GM12878 (cell line): ENCODE measurements at regions of chr19 and their contacts with region 1.

Region 1: GRCh38 chr19:18521885-18522624 is at the start of gene ELL:
- DNase-seq: peak; percentile 99
- ATAC-seq: peak; percentile 94
- H3K4me3 ChIP-seq: peak within 1 kb of the TSS; percentile 98
- H3K27ac ChIP-seq: peak within 1 kb of the TSS; percentile 89
- H3K4me1 ChIP-seq: peaks cover 8% of the 10 kb centered on the region
- H3K27me3 ChIP-seq: no peaks in the 10 kb centered on the region
- CTCF ChIP-seq: 0 out of 6 replicates have a peak, but pooled peaks of 1 of the 3 experiments have one; percentile 2
- EP300 ChIP-seq: no peak; a peak in 1 of 4 replicates
- POLR2A ChIP-seq: peak; percentile 98
- RAD21 ChIP-seq: no peak
- polyA plus RNA-seq, gene ELL: 0.91 to 0.98 TPM

Region 2: GRCh38 chr19:18507021-18507726 is 14.9 kb before region 1 on chr19:
- CTCF ChIA-PET with region 1: interaction called, 11 read pairs
- POLR2A ChIA-PET with region 1: no interaction called
- RAD21 ChIA-PET with region 1: interaction called, 4 read pairs
- SMC1A ChIA-PET with region 1: interaction called, 4 read pairs
- in situ Hi-C with region 1: no loop called
- intact Hi-C with region 1: no loop called
- DNase-seq: no peak
- ATAC-seq: no peak
- H3K4me3 ChIP-seq: no peak overlapping the region
- H3K27ac ChIP-seq: no peak overlapping the region
- H3K4me1 ChIP-seq: peaks cover 31% of the 10 kb centered on the region
- H3K27me3 ChIP-seq: no peaks in the 10 kb centered on the region
- CTCF ChIP-seq: no peak
- EP300 ChIP-seq: no peak
- POLR2A ChIP-seq: no peak
- RAD21 ChIP-seq: no peak

Region 3: DNA sequence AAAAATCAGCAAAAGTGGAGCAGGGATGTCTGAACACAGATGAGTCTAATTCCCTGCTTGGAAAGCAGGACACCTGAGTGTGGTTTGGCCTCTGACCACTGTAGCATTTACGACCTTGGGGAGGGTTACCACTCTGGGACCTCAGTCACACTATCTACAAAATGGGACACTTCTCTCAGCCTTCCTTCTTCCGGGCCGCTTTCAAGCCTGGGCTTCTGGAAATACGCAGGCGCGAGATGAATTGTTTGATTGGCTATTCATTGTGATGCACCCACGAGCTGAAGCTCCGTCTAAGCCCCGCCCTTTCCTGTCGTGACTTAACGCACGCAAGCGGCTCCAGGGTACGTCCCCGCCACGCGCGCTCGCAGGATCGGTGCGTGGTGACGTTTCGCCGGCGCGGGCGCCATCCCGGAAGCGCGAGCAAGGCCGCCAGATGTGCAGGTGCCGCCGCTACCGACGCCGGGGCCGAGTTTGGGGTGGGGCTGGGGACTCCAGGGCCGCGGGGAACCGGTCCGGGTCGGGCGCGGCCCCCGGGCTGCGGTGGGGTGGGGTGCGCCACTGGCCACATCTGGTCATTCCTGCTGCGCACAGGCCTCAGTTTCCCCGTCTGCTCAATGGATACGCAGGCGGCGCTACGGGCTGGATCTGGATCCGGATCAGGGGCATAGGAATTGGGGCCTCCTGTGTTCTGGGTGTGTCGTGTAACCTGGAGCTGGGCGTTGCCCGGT is 35.6 kb after region 1 on chr19 and contains the start of gene KXD1:
- CTCF ChIA-PET with region 1: interaction called, 26 read pairs
- POLR2A ChIA-PET with region 1: interaction called, 48 read pairs
- RAD21 ChIA-PET with region 1: interaction called, 9 read pairs
- SMC1A ChIA-PET with region 1: interaction called, 24 read pairs
- in situ Hi-C with region 1: no loop called
- intact Hi-C with region 1: loop called (anchors 1 kb)
- DNase-seq: peak; percentile 98
- ATAC-seq: peak; percentile 97
- H3K4me3 ChIP-seq: peak within 1 kb of the TSS; percentile 95
- H3K27ac ChIP-seq: peak within 1 kb of the TSS; percentile 85
- H3K4me1 ChIP-seq: no peaks in the 10 kb centered on the region
- H3K27me3 ChIP-seq: no peaks in the 10 kb centered on the region
- CTCF ChIP-seq: no peak
- EP300 ChIP-seq: no peak
- POLR2A ChIP-seq: peak; percentile 92
- RAD21 ChIP-seq: no peak
- polyA plus RNA-seq, gene KXD1: 27.5 to 44.9 TPM

Region 4: DNA sequence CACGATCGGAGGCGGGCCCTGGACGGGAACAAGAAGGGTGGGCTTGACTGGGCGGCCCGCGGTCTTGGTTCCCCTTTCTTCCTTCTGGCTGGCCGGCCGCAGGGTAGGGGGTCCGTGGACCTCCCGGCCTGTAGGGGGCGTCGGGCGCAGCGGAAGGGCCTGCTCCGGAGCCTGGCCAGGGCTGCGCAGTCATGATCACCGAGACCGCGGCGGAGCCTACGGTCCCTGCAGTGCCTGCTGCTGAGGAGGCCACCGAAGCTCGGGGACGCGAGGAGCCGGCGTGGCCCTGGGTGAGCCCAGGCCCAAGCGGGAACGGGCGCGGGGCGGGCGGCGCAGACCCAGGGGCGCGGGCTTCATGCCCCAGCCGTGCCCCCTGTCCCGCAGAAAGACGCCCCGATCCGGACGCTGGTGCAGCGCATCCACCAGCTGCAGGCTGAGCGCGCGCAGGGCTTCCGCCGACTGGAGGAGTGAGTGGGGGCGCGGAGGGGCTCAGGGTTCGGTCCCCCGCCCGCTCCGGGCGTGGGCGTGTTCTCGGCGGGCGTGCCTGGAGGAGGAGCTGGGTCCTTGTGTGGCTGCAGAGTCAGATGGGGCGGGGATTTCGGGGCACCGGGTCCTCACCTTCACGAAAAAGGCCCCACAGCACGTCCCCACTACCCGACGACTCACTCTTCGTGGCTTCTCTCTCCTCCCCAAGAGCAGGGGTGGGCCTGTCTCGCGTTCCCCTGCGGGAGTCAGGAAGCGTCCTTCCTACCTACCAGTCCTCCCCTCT is 66.7 kb after region 1 on chr19 and contains the start of gene REX1BD:
- CTCF ChIA-PET with region 1: interaction called, 64 read pairs
- POLR2A ChIA-PET with region 1: interaction called, 21 read pairs
- RAD21 ChIA-PET with region 1: interaction called, 35 read pairs
- SMC1A ChIA-PET with region 1: interaction called, 18 read pairs
- in situ Hi-C with region 1: no loop called
- intact Hi-C with region 1: loop called (anchors 2 kb)
- DNase-seq: peak; percentile 54
- ATAC-seq: peak; percentile 92
- H3K4me3 ChIP-seq: peak within 1 kb of the TSS; percentile 70
- H3K27ac ChIP-seq: peak within 1 kb of the TSS; percentile 72
- H3K4me1 ChIP-seq: peaks cover 32% of the 10 kb centered on the region
- H3K27me3 ChIP-seq: peaks cover 0 to 2% of the 10 kb centered on the region in 2 experiments; a peak in 1 of 4 replicates
- CTCF ChIP-seq: peak; percentile 89 to 92 (median 91)
- EP300 ChIP-seq: 0 out of 4 replicates have a peak, but pooled peaks of 1 of the 2 experiments have one; percentile 3
- POLR2A ChIP-seq: peak; percentile 91
- RAD21 ChIP-seq: no peak
- polyA plus RNA-seq, gene REX1BD: 1.1 to 3.3 TPM

Region 5: DNA sequence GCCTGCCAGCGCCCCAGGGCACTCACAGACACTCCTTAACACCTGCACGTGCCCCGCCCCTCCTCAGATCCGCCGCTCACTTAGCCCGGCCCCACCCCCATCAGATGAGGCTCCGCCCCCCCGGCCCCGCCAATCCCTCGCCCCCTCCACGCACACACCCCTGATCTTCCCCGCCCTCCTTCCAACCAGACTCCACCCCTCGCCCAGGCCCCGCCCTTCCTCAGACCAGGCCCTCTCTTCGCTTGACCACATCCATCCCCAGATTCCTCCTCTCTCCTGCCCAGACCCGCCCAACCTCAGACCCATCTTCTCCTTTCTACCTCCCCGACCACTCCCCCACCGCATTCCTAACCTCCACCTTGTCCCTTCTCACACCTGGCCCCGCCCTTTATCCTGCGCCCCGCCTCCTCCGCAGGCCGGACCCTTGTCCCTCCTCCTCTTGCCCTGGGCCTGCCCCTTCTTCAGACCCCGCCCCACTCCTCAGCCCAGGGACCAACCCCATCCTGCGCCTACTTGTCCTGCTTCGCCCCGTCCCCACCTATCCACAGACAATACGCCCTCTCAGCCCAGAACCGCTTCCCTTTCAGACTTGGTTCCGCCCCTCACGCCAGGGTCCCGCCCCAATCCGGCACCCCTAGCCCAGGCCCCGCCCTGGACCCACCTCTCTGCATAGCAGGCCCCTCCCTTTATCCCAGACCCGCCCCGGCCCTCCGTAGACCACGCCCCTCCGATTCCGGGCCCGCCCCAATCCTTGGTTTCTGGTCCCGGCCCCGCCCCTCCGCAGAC is 114.3 kb after region 1 on chr19:
- CTCF ChIA-PET with region 1: no interaction called
- POLR2A ChIA-PET with region 1: no interaction called
- RAD21 ChIA-PET with region 1: interaction called, 4 read pairs
- SMC1A ChIA-PET with region 1: no interaction called
- in situ Hi-C with region 1: no loop called
- intact Hi-C with region 1: loop called (anchors 1 kb)
- DNase-seq: peak; percentile 83
- ATAC-seq: peak; percentile 96
- H3K4me3 ChIP-seq: peak overlapping the region; percentile 72
- H3K27ac ChIP-seq: peak overlapping the region; percentile 31; the same call in 1 of the 2 replicates
- H3K4me1 ChIP-seq: peaks cover 9% of the 10 kb centered on the region
- H3K27me3 ChIP-seq: no peaks in the 10 kb centered on the region
- CTCF ChIP-seq: no peak
- EP300 ChIP-seq: no peak
- POLR2A ChIP-seq: no peak
- RAD21 ChIP-seq: no peak

Region 6: DNA sequence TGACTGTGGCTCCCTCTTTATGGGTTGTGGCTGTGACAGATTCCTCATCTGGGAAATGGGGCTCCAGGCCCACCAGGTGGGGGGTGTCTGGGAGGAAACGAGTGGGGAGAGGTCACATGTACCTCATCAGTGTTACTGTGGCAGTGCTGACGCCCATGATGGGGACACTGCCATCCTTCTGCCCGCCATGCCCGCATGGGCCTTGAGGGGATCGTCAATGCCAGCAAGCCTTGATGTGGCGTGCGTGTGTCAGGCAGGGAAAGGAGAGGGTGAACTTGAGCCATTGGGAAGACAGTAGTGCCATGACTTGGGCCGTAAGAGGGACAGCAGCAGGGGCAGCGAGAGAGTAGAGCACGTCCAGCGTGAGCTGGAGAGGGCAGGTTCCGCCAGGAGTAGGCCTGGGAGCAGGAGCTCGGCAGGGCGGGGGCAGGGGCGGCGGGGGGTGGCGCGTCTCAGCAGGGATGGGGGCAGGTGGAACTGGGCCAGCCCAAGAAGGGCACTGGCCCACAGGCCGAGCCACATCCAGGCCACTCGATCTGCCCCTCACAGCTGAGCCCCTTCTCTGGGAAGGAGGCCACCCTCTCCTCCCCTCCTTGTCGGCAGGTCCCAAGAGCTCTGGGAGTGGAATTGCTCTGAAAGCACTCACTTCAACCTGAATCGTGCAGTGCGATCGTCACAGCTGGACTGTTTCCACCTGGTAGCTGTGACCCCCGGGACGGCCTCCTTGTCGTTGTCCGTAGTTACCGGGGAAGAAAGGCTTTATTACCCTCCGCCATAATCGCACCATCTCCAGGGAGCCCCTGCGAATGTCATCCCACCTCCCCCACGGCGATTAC is 124.7 kb after region 1 on chr19:
- CTCF ChIA-PET with region 1: no interaction called
- POLR2A ChIA-PET with region 1: no interaction called
- RAD21 ChIA-PET with region 1: no interaction called
- SMC1A ChIA-PET with region 1: no interaction called
- in situ Hi-C with region 1: no loop called
- intact Hi-C with region 1: no loop called
- DNase-seq: no peak
- ATAC-seq: no peak
- H3K4me3 ChIP-seq: no peak overlapping the region
- H3K27ac ChIP-seq: no peak overlapping the region
- H3K4me1 ChIP-seq: peaks cover 18% of the 10 kb centered on the region
- H3K27me3 ChIP-seq: no peaks in the 10 kb centered on the region
- CTCF ChIP-seq: no peak
- EP300 ChIP-seq: no peak
- POLR2A ChIP-seq: no peak
- RAD21 ChIP-seq: no peak